Common myeloid progenitor, CD34-positive (primary cell): ENCODE measurements at regions of chr16 and their contacts with region 1.

Region 1: GRCh38 chr16:85569615-85570212 is 43.4 kb upstream of the GSE1 start:
- DNase-seq: peak in 2 of 3 donors; percentile 83 to 86
- H3K4me3 ChIP-seq: peak overlapping the region in 4 of 7 experiments; percentile 41 to 45 (median 44)
- H3K27ac ChIP-seq: peak overlapping the region; percentile 41 to 87
- H3K4me1 ChIP-seq: peaks cover 4 to 98% (median 95%) of the 10 kb centered on the region in 4 experiments
- H3K27me3 ChIP-seq: no peaks in the 10 kb centered on the region

Region 2: GRCh38 chr16:84599521-84600202 is 970.1 kb before region 1 on chr16:
- CTCF ChIA-PET with region 1: no interaction called
- POLR2A ChIA-PET with region 1: no interaction called
- DNase-seq: peak; percentile 64 to 87 (median 79)
- H3K4me3 ChIP-seq: peak overlapping the region in 6 of 7 experiments; percentile 35 to 73 (median 50)
- H3K27ac ChIP-seq: peak overlapping the region; percentile 47 to 84
- H3K4me1 ChIP-seq: peaks cover 13 to 77% (median 54%) of the 10 kb centered on the region in 4 experiments
- H3K27me3 ChIP-seq: no peaks in the 10 kb centered on the region

Region 3: DNA sequence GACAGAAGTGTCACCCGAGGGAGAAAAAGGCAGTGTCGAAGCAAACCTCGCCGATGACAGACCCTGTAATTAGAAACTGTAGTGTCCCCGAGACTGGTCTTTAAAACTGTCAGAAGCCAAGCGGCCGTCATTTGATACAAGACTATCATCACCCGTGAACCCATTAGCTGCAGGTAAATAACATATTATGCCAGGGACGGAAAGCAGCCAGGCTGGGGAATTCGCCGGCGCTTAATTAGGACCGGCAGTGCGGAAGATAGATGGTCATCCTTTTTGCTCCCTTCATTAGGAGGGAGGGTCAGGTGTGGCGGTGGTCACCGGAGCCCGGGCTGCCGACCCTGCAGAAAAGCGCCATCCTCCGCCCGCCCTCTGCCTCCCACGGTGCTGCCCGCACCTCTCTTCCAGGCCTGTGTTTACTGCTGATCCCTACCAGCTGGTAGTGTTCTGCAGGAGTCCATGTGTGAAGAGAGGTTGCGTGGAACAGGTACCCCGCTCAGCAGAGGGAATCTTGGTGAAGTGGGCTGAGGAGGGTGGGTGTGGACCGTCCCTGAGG is 66.0 kb before region 1 on chr16:
- CTCF ChIA-PET with region 1: no interaction called
- POLR2A ChIA-PET with region 1: no interaction called
- DNase-seq: no peak
- H3K4me3 ChIP-seq: no peak overlapping the region
- H3K27ac ChIP-seq: no peak overlapping the region
- H3K4me1 ChIP-seq: peaks cover 0 to 8% (median 4%) of the 10 kb centered on the region in 4 experiments
- H3K27me3 ChIP-seq: no peaks in the 10 kb centered on the region

Region 4: GRCh38 chr16:85583491-85584181 is 13.9 kb after region 1 on chr16:
- CTCF ChIA-PET with region 1: interaction called, 12 read pairs
- POLR2A ChIA-PET with region 1: interaction called, 3 read pairs
- DNase-seq: peak in 2 of 3 donors; percentile 55 to 63
- H3K4me3 ChIP-seq: no peak overlapping the region
- H3K27ac ChIP-seq: no peak overlapping the region
- H3K4me1 ChIP-seq: peaks cover 0 to 23% (median 20%) of the 10 kb centered on the region in 4 experiments
- H3K27me3 ChIP-seq: no peaks in the 10 kb centered on the region

Region 5: GRCh38 chr16:85592700-85593493 is 23.2 kb after region 1 on chr16:
- CTCF ChIA-PET with region 1: interaction called, 11 read pairs
- POLR2A ChIA-PET with region 1: no interaction called
- DNase-seq: no peak
- H3K4me3 ChIP-seq: no peak overlapping the region
- H3K27ac ChIP-seq: no peak overlapping the region
- H3K4me1 ChIP-seq: peaks cover 8 to 30% (median 21%) of the 10 kb centered on the region in 4 experiments
- H3K27me3 ChIP-seq: no peaks in the 10 kb centered on the region

Region 6: GRCh38 chr16:85601730-85602401 is 32.2 kb after region 1 on chr16:
- CTCF ChIA-PET with region 1: interaction called, 11 read pairs
- POLR2A ChIA-PET with region 1: no interaction called
- DNase-seq: no peak
- H3K4me3 ChIP-seq: no peak overlapping the region
- H3K27ac ChIP-seq: no peak overlapping the region
- H3K4me1 ChIP-seq: peaks cover 0 to 40% (median 37%) of the 10 kb centered on the region in 4 experiments
- H3K27me3 ChIP-seq: peaks cover 0 to 2% (median 0%) of the 10 kb centered on the region in 5 experiments

Region 7: GRCh38 chr16:85610508-85611332 is 41.0 kb after region 1 on chr16:
- CTCF ChIA-PET with region 1: interaction called, 18 read pairs
- POLR2A ChIA-PET with region 1: interaction called, 4 read pairs
- DNase-seq: peak; percentile 84 to 88 (median 86)
- H3K4me3 ChIP-seq: peak overlapping the region in 5 of 7 experiments; percentile 36 to 85 (median 65)
- H3K27ac ChIP-seq: peak overlapping the region; percentile 23 to 71
- H3K4me1 ChIP-seq: peaks cover 3 to 73% (median 60%) of the 10 kb centered on the region in 4 experiments
- H3K27me3 ChIP-seq: no peaks in the 10 kb centered on the region